PC-9 (cell line): ENCODE measurements at regions of chr16 and their contacts with region 1.

Region 1: GRCh38 chr16:75074920-75075687 is 41.5 kb downstream of the LDHD start:
- DNase-seq: no peak
- H3K4me3 ChIP-seq: no peak overlapping the region
- H3K27ac ChIP-seq: no peak overlapping the region
- H3K4me1 ChIP-seq: peaks cover 8% of the 10 kb centered on the region
- H3K27me3 ChIP-seq: no peaks in the 10 kb centered on the region
- CTCF ChIP-seq: no peak

Region 2: GRCh38 chr16:73909529-73910035 is 1165.5 kb before region 1 on chr16:
- CTCF ChIA-PET with region 1: no interaction called
- POLR2A ChIA-PET with region 1: no interaction called
- intact Hi-C with region 1: no loop called
- DNase-seq: no peak
- H3K4me3 ChIP-seq: no peak overlapping the region
- H3K27ac ChIP-seq: no peak overlapping the region
- H3K4me1 ChIP-seq: no peaks in the 10 kb centered on the region
- H3K27me3 ChIP-seq: peaks cover 23% of the 10 kb centered on the region
- CTCF ChIP-seq: no peak

Region 3: DNA sequence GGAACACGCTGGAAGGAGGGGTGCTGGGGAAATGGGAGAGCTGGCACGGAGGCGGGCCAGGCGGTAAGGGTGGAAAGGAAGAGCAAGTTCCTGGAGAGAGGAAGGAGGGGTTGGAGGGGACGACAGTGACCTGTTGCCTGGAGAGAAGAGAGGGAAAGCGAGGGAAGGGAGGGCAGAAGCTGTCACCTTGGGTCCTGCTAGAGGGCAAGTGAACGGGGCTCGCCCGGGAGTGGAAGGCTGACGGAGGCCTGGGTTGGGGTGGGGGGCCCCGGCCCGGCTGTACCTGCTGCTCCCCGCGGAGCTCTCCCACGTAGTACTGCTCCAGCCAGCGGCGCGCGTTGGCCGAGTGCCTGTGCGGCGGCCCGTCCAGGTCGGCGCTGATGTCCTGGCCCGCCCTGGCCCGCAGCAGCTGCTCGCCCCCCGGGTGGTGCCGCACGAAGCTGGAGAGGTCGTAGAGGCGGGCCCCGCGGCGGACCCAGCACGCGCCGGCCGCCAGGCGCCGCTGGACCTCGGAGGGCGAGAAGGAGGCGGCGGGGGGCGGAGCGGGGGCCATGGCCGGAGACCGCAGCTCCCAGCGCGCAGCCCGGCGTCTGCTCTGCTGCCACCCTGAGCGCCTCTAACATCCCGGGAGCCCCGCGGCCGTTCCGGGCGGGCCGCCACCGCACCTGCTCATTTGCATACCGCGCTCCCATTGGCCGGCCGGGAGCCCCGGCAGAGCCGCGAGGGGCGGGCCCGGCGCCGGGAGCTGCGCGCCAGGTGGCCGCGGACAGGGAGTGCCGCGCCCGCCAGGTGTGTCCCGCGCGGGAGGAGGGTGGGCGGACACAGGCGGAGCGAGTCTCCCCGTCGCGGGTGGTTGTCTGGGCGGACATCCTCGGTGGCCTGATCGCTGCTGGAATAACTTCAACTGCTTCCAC is 300.6 kb before region 1 on chr16 and contains the start of gene FA2H:
- CTCF ChIA-PET with region 1: interaction called, 12 read pairs
- POLR2A ChIA-PET with region 1: no interaction called
- intact Hi-C with region 1: no loop called
- DNase-seq: peak; percentile 84 to 95
- H3K4me3 ChIP-seq: peak within 1 kb of the TSS; percentile 68
- H3K27ac ChIP-seq: no peak within 1 kb of the TSS
- H3K4me1 ChIP-seq: peaks cover 4% of the 10 kb centered on the region; the same call in 1 of the 2 replicates
- H3K27me3 ChIP-seq: no peaks in the 10 kb centered on the region
- CTCF ChIP-seq: peak; percentile 48; the same call in 1 of the 2 replicates
- total RNA-seq, gene FA2H: 3.5 and 4.8 TPM in 2 replicates

Region 4: DNA sequence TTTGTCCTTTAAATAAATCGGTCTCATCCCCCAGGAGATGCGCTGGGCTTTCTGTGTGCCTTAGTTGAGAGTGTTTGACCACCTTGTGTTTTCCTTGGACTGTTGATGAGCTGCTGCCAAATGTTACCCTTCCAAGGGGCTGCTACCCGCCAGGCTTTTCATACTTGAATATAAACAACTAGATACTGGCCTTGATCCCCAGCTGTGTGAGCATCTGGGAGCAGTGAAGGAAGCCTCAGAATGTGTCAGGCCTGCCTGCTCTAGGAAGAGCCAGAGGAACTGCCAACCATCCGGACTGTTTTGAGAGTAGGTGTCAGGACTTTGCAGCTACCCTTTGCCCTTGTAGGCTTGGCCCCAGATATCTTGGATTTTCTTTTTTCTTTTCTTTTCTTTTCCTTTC is 16.3 kb before region 1 on chr16:
- CTCF ChIA-PET with region 1: no interaction called
- POLR2A ChIA-PET with region 1: no interaction called
- intact Hi-C with region 1: no loop called
- DNase-seq: no peak
- H3K4me3 ChIP-seq: no peak overlapping the region
- H3K27ac ChIP-seq: no peak overlapping the region
- H3K4me1 ChIP-seq: peaks cover 63% of the 10 kb centered on the region
- H3K27me3 ChIP-seq: no peaks in the 10 kb centered on the region
- CTCF ChIP-seq: no peak

Region 5: DNA sequence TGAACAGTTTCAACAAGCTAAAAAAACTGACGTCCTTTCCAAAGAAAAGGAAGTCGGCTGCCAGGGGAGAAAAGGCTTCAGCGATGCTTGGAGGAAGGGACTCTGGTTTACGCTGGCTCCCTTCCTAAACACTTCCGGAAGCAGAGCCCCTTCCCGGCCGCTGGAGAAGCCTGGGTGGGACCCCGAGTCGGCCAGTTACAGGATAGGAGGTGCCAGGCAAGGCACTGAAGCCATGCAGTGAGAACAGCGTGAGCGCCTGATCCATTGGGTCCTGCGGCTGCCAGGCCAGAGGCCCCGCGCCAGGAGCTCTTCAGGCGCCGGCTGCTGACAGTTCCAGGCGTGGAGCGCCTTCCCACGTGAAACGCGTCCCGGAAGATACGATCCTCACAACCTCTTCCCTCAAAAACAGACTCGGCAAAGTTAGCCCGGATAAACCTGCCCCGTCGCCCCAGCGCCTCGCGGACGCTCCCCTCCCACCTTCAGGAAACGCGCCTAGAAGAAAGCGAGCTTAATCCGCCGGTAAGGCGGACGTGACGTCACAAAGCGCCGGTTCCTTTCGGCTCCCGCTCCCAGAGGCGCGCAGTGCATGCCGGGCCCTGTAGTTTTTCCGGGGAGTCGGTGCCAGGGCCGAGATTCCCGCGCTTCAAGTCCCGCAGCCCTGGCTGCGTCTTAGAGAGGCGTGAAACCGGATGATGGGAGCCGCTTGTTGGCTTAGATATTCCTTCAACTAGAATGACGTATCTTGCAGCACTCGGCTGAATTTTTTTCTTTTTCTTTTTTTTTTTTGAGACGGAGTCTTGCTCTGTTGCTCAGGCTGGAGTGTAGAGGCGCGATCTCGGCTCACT is 547.9 kb after region 1 on chr16 and contains the start of gene ADAT1:
- CTCF ChIA-PET with region 1: no interaction called
- POLR2A ChIA-PET with region 1: no interaction called
- intact Hi-C with region 1: no loop called
- DNase-seq: peak; percentile 94 to 95
- H3K4me3 ChIP-seq: peak within 1 kb of the TSS; percentile 88
- H3K27ac ChIP-seq: peak within 1 kb of the TSS; percentile 59
- H3K4me1 ChIP-seq: peaks cover 17% of the 10 kb centered on the region
- H3K27me3 ChIP-seq: no peaks in the 10 kb centered on the region
- CTCF ChIP-seq: no peak
- total RNA-seq, gene ADAT1: 57.9 and 66.4 TPM in 2 replicates